PC-9 (cell line): ENCODE measurements at regions of chr3 and their contacts with region 1.

Region 1: DNA sequence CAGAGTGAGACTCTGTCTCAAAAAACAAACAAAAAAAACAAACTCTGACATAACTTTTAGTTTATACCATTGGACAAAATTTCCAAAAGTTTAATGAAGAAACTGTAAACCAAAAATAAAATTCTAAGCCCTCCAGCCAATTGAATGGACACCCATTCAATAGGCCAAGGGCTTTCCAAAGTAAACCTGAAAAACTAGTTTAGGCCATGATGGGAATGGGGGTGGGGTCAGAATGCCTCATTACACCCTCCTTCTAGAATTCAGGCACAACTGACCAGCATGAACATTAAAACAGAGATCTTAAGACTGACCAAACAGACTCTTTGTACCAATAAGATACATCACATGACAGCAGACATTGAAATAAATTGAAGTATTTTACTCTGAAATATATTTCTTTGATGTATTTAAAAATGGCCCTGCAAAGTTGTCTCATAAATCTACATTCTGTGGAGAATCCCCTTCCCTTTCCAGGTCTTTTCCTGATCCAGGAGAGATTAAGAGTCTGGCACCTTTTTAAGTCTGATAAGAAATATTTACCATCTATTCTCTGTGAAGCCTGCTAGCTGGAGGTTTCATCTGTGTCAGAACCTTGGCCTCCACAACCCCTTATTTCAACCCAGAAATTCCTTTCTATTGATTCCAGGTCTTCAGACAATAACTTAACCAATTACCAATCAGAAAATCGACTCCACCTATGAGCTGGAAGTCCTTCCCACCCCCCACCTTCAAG is 15.7 kb downstream of the THOC7 start:
- DNase-seq: peak; percentile 41 to 60
- H3K4me3 ChIP-seq: peak overlapping the region; percentile 5; the same call in 1 of the 2 replicates
- H3K27ac ChIP-seq: 0 out of 2 replicates have a peak overlapping the region, but pooled peaks have one; percentile 16
- H3K4me1 ChIP-seq: peaks cover 17% of the 10 kb centered on the region
- H3K27me3 ChIP-seq: no peaks in the 10 kb centered on the region
- CTCF ChIP-seq: no peak

Region 2: GRCh38 chr3:61975199-61975598 is 1872.7 kb before region 1 on chr3:
- CTCF ChIA-PET with region 1: no interaction called
- POLR2A ChIA-PET with region 1: interaction called, 21 read pairs
- intact Hi-C with region 1: no loop called
- DNase-seq: no peak
- H3K4me3 ChIP-seq: no peak overlapping the region
- H3K27ac ChIP-seq: no peak overlapping the region
- H3K4me1 ChIP-seq: no peaks in the 10 kb centered on the region
- H3K27me3 ChIP-seq: no peaks in the 10 kb centered on the region
- CTCF ChIP-seq: no peak